Astrocyte of the cerebellum (primary cell): ENCODE measurements at regions of chr17 and their contacts with region 1.

Region 1: GRCh38 chr17:49227436-49228261 is 2.9 kb downstream of the PHOSPHO1 start:
- DNase-seq: peak; percentile 22
- H3K4me3 ChIP-seq: no peak overlapping the region
- CTCF ChIP-seq: peak; percentile 87

Region 2: GRCh38 chr17:49285716-49286115 is 58.1 kb after region 1 on chr17:
- in situ Hi-C with region 1: loop called (anchors 5 kb)
- DNase-seq: no peak
- H3K4me3 ChIP-seq: no peak overlapping the region
- CTCF ChIP-seq: no peak

Region 3: DNA sequence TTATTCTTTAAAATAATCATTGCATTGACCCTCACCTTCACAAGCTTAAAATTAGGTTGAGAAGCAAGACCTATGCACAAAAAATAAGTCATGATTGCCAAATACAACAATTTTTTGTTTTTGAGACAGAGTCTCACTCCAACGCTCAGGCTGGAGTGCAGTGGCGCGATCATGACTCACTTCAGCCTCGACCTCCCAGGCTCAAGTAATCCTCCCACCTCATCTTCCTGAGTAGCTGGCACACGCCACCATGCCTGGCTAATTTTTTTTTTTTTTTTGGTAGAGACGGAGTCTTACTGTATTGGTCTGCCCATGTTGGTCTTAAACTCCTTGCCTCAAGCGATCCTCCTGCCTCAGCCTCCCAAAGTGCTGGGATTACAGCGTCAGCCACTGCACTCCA is 110.2 kb after region 1 on chr17:
- in situ Hi-C with region 1: no loop called
- DNase-seq: no peak
- H3K4me3 ChIP-seq: no peak overlapping the region
- CTCF ChIP-seq: no peak